ENCODE measurements at regions of chr14 and their contacts with region 1.

Region 1: DNA sequence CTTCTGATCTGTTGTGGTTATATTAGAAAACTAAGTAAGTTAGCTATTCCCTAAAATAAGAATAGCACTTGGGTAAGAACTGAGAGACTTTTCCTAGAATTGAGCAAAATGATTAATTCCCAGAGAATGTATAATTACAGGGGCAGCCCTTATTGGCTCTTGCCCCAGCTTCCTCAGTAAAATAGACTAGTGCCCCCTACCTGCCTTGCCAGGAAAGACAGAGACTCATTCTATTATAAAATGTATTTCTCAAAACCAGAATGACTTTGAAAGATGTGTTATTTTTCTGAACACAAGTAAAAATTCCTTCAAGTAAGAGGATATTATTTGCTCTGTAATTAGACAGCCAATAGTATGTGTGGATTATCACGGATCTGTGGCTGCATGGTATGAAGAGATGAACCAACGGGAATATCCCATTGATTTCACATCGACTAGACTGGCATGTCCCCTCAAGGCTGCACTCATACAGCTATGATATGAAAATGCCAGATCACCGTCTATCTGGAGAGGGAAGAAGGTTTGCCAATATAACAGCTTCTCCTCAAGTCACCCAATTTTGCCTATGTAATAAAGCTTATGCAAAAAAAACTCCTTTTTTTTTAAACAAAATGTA is 7.4 kb upstream of the GLRX5 start:
- DNase-seq: no peak
- H3K4me3 ChIP-seq: no peak overlapping the region
- H3K27ac ChIP-seq: no peak overlapping the region
- H3K4me1 ChIP-seq: peaks cover 0 to 12% (median 0%) of the 10 kb centered on the region in 4 experiments; a peak in 2 of 7 replicates
- H3K27me3 ChIP-seq: no peaks in the 10 kb centered on the region
- CTCF ChIP-seq: peak in 2 of 3 experiments; percentile 49 to 50; a peak in 3 of 4 replicates
- EP300 ChIP-seq: no peak
- POLR2A ChIP-seq: no peak
- RAD21 ChIP-seq: peak; percentile 49 to 52

Region 2: GRCh38 chr14:95452176-95452892 is 75.2 kb before region 1 on chr14:
- CTCF ChIA-PET with region 1: interaction called, 27 read pairs
- POLR2A ChIA-PET with region 1: interaction called, 3 read pairs
- DNase-seq: peak in 1 of 2 experiments; percentile 60
- H3K4me3 ChIP-seq: no peak overlapping the region
- H3K27ac ChIP-seq: no peak overlapping the region
- H3K4me1 ChIP-seq: no peaks in the 10 kb centered on the region
- H3K27me3 ChIP-seq: no peaks in the 10 kb centered on the region
- CTCF ChIP-seq: peak; percentile 41 to 77 (median 54)
- EP300 ChIP-seq: no peak
- POLR2A ChIP-seq: no peak
- RAD21 ChIP-seq: peak; percentile 29 to 61; a peak in 3 of 4 replicates

Region 3: DNA sequence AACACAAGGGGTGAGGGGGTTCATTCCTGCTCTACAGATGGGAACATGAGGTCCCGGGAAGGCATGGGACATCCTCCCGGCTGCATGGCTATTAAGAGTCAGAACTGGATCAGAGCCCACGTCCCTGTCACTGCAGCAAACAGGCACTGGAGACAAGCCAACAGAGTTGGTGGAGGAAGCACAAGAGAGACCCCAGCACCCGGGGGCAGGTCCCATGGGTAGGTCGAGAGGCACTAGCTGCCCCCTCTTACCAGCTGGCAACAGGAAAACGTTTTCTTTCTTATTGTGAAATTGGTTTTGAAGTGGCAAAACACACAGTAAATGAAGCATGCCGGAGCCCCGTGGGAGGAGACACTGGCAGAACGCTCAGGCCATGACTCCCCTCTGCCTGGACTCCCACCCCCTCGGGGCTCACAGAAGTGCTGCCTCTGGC is 54.7 kb before region 1 on chr14:
- CTCF ChIA-PET with region 1: interaction called, 12 read pairs
- POLR2A ChIA-PET with region 1: no interaction called
- DNase-seq: no peak
- H3K4me3 ChIP-seq: no peak overlapping the region
- H3K27ac ChIP-seq: no peak overlapping the region
- H3K4me1 ChIP-seq: no peaks in the 10 kb centered on the region; a peak in 1 of 7 replicates
- H3K27me3 ChIP-seq: no peaks in the 10 kb centered on the region
- CTCF ChIP-seq: no peak
- EP300 ChIP-seq: no peak
- POLR2A ChIP-seq: no peak
- RAD21 ChIP-seq: no peak

Region 4: DNA sequence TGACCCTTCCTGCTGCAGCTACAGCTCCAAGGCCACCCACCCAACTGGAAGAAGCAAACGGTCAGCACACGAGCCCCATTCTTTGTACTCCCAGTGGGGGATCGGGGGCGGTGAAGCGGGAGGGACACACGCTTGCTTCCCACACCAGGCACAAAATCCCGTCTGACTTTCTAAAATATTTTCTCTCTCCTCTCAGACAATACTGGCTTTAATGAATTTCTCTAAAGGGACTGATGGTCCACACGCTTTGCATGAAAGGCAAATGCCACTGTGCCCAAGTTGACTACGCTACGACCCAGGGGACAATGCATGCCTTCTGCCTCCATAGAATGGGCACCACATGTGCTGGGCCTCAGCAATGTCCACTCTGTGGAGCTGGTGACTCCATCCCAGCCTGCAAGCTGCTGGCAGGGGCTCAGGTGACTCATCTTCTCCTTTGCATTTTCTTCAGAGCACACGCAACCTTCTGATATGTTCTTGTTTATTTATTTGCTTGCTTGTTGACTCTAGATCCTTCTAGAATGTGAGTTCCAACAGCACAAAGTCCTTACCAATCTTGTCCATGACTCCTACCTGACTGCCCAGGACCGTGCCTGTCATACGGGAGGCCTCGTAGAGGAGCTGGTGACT is 26.6 kb before region 1 on chr14:
- CTCF ChIA-PET with region 1: interaction called, 10 read pairs
- POLR2A ChIA-PET with region 1: no interaction called
- DNase-seq: no peak
- H3K4me3 ChIP-seq: no peak overlapping the region
- H3K27ac ChIP-seq: no peak overlapping the region
- H3K4me1 ChIP-seq: 0 out of 7 replicates have a peak, but pooled peaks cover 0 to 3% (median 0%) of the 10 kb centered on the region in 4 experiments
- H3K27me3 ChIP-seq: no peaks in the 10 kb centered on the region; a peak in 1 of 7 replicates
- CTCF ChIP-seq: no peak
- EP300 ChIP-seq: no peak
- POLR2A ChIP-seq: no peak
- RAD21 ChIP-seq: no peak

Region 5: DNA sequence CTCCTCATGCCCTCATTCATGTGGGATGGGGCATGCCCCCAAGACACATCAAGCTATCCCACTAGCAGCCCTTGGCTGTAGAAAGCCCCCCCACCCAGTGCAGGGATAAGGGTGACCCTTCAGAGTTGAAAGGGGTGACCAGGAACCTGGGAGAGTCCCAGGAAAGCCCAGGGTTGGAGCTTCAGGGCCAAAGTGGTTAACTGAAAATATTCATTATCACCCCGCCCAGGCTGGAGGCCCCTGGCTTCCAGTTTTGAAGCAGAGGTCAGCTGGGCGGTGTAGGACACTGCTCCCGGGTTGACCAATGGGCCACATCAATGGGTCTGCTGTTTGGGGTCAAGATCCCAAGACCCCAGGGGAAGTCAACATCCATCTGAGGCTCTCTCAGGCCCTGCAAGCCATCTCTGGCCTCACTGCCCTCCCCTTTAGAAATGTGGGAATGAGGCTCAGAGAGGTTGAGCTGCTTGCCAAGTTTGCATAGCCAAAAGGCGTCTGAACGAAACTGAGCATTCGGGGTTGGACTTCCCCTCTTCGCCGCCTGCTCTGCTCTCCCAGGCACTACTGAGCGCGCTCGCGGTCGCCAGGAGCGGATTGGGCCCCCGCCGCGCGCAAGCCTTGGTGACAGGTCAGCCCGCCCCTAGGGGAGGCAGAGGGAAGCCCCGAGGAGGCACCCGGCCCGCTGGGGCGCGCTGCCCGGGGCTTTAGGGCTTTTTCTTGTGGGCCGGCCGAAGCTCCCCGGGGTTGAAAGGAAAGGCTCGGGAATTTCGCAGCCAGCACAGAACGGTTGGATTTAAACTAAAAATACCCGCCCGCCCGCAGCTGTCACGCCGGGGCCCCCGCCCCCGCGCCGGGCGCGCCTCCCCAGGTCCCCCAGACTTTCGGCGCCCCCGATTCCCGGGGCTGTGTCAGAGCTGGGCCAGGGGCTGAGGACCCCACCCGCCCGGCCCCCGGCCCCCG is 11.6 kb before region 1 on chr14:
- CTCF ChIA-PET with region 1: interaction called, 32 read pairs
- POLR2A ChIA-PET with region 1: interaction called, 5 read pairs
- DNase-seq: peak in 1 of 2 experiments; percentile 73
- H3K4me3 ChIP-seq: peak overlapping the region; percentile 31 to 66 (median 40)
- H3K27ac ChIP-seq: no peak overlapping the region
- H3K4me1 ChIP-seq: peaks cover 0 to 22% (median 8%) of the 10 kb centered on the region in 4 experiments; a peak in 5 of 7 replicates
- H3K27me3 ChIP-seq: peaks cover 4 to 33% (median 27%) of the 10 kb centered on the region in 4 experiments
- CTCF ChIP-seq: peak; percentile 11 to 38 (median 12)
- EP300 ChIP-seq: no peak
- POLR2A ChIP-seq: no peak
- RAD21 ChIP-seq: 0 out of 4 replicates have a peak, but pooled peaks have one; percentile 9 to 10